ENCODE measurements at regions of chr17 and their contacts with region 1.

Region 1: GRCh38 chr17:47733047-47733673 is at the start of gene TBX21:
- DNase-seq: no peak
- ATAC-seq: peak; percentile 80
- H3K4me3 ChIP-seq: peak within 1 kb of the TSS; percentile 92
- H3K27ac ChIP-seq: peak within 1 kb of the TSS; percentile 84
- H3K4me1 ChIP-seq: peaks cover 27% of the 10 kb centered on the region
- H3K27me3 ChIP-seq: 0 out of 4 replicates have a peak, but pooled peaks cover 0 to 1% of the 10 kb centered on the region in 2 experiments
- CTCF ChIP-seq: peak; percentile 34 to 64 (median 52)
- EP300 ChIP-seq: no peak
- POLR2A ChIP-seq: peak; percentile 95
- RAD21 ChIP-seq: peak; percentile 50
- polyA plus RNA-seq, gene TBX21: 0.63 to 1.8 TPM

Region 2: GRCh38 chr17:47649153-47649971 is 83.8 kb before region 1 on chr17 and contains the start of gene KPNB1:
- CTCF ChIA-PET with region 1: interaction called, 4 read pairs
- POLR2A ChIA-PET with region 1: interaction called, 6 read pairs
- RAD21 ChIA-PET with region 1: interaction called, 3 read pairs
- SMC1A ChIA-PET with region 1: interaction called, 3 read pairs
- in situ Hi-C with region 1: no loop called
- intact Hi-C with region 1: loop called (anchors 10 kb)
- DNase-seq: peak; percentile 99
- ATAC-seq: peak; percentile 88
- H3K4me3 ChIP-seq: peak within 1 kb of the TSS; percentile 84
- H3K27ac ChIP-seq: peak within 1 kb of the TSS; percentile 99
- H3K4me1 ChIP-seq: peaks cover 22% of the 10 kb centered on the region
- H3K27me3 ChIP-seq: no peaks in the 10 kb centered on the region
- CTCF ChIP-seq: no peak
- EP300 ChIP-seq: peak in 1 of 2 experiments; percentile 52; a peak in 2 of 4 replicates
- POLR2A ChIP-seq: peak; percentile 76
- RAD21 ChIP-seq: no peak
- polyA plus RNA-seq, gene KPNB1: 130 to 233 TPM

Region 3: GRCh38 chr17:47713980-47714700 is 19.0 kb before region 1 on chr17:
- CTCF ChIA-PET with region 1: interaction called, 34 read pairs
- POLR2A ChIA-PET with region 1: interaction called, 23 read pairs
- RAD21 ChIA-PET with region 1: interaction called, 25 read pairs
- SMC1A ChIA-PET with region 1: interaction called, 56 read pairs
- in situ Hi-C with region 1: no loop called
- intact Hi-C with region 1: loop called (anchors 2 kb)
- DNase-seq: no peak
- ATAC-seq: peak; percentile 40
- H3K4me3 ChIP-seq: no peak overlapping the region
- H3K27ac ChIP-seq: no peak overlapping the region
- H3K4me1 ChIP-seq: peaks cover 61% of the 10 kb centered on the region
- H3K27me3 ChIP-seq: no peaks in the 10 kb centered on the region; a peak in 2 of 4 replicates
- CTCF ChIP-seq: peak; percentile 22 to 27 (median 23); a peak in 5 of 6 replicates
- EP300 ChIP-seq: no peak
- POLR2A ChIP-seq: no peak
- RAD21 ChIP-seq: no peak

Region 4: DNA sequence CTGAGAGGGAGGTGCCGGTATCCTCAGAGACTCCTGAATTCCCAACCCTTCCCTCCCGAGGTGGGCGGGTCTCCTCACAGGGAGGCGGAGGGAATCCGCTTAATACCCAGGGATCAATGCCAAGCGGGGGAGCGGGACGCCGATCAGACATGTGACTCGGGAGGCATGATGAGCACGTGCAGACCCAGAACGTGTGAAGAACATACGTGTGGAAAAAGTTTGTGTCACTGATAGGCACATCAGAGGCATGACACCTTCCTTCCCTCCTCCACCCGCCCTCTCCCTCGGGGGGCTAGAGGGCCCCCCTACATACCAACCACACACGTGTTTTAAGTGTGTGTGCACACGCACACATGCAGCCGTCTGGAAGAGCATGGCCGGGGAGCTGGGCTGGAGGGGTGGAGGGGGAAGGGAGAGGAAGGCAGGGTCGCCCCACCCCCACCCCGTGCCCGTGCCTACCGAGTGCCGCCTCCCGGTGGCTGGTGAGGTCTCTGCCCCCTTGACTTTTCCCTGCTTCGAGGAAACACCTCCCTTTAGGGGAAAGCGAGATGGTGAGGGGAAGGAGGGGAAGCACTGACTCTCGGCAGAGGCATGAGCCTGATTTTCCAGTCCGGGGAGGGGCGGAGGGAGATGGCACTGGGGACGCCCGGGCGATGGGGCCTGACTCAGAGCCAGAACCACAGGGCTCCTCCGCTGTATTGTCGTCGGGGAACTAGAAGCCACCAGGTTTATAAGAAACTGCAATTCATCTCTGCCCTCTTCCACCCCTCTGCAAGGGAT is 12.2 kb before region 1 on chr17:
- CTCF ChIA-PET with region 1: interaction called, 34 read pairs
- POLR2A ChIA-PET with region 1: interaction called, 23 read pairs
- RAD21 ChIA-PET with region 1: interaction called, 25 read pairs
- SMC1A ChIA-PET with region 1: interaction called, 56 read pairs
- in situ Hi-C with region 1: no loop called
- intact Hi-C with region 1: no loop called
- DNase-seq: no peak
- ATAC-seq: peak; percentile 71
- H3K4me3 ChIP-seq: no peak overlapping the region
- H3K27ac ChIP-seq: no peak overlapping the region
- H3K4me1 ChIP-seq: peaks cover 63% of the 10 kb centered on the region
- H3K27me3 ChIP-seq: peaks cover 0 to 5% of the 10 kb centered on the region in 2 experiments; a peak in 3 of 4 replicates
- CTCF ChIP-seq: no peak
- EP300 ChIP-seq: no peak
- POLR2A ChIP-seq: no peak
- RAD21 ChIP-seq: no peak